ENCODE measurements at regions of chrX and their contacts with region 1.

Region 1: GRCh38 chrX:2351999-2352995 is 148.5 kb downstream of the DHRSX start:
- DNase-seq: peak; percentile 99
- ATAC-seq: peak; percentile 93
- H3K4me3 ChIP-seq: no peak overlapping the region
- H3K27ac ChIP-seq: peak overlapping the region; percentile 87
- H3K4me1 ChIP-seq: peaks cover 14% of the 10 kb centered on the region
- H3K27me3 ChIP-seq: no peaks in the 10 kb centered on the region
- CTCF ChIP-seq: 0 out of 2 replicates have a peak, but pooled peaks have one; percentile 2
- POLR2A ChIP-seq: no peak
- RAD21 ChIP-seq: peak; percentile 20

Region 2: DNA sequence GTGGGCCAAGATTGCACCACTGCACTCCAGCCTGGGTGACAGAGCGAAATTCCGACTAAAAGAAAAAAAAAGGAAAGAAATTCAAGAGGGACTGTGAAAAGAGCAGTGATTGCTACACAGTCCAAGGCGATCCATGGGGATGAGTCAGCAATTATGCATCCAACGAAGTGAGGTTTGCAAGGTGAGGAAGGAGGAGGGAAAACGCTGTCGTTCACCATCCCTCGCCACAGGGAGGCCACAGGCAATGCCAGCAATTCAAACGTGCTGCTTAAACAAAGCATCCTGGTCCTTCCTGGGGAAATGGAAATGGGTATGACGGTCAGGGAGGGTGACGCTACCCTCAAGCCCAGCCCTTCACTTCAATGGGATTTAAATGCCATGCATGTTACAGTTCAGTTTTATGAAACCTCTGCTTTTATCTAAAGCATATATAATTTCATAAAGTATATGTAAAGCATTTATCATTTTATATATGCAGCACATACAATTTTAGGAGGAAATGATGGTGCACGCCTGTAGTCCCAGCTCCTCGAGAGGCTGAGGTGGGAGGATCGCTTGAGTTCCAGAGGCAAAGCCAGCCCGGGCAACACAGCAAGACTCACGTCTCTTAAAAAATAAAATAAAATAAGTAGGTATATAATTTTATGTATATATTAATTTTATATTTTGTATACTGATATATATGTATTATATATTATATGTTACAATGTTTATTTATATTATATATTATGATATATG is 39.7 kb after region 1 on chrX:
- CTCF ChIA-PET with region 1: no interaction called
- POLR2A ChIA-PET with region 1: no interaction called
- dilution Hi-C with region 1: no loop called
- in situ Hi-C with region 1: no loop called
- intact Hi-C with region 1: no loop called
- DNase-seq: peak; percentile 82
- ATAC-seq: peak; percentile 69
- H3K4me3 ChIP-seq: no peak overlapping the region
- H3K27ac ChIP-seq: no peak overlapping the region
- H3K4me1 ChIP-seq: peaks cover 7% of the 10 kb centered on the region
- H3K27me3 ChIP-seq: no peaks in the 10 kb centered on the region
- CTCF ChIP-seq: no peak
- POLR2A ChIP-seq: no peak
- RAD21 ChIP-seq: no peak

Region 3: GRCh38 chrX:2451501-2452316 is 99.4 kb after region 1 on chrX:
- CTCF ChIA-PET with region 1: no interaction called
- POLR2A ChIA-PET with region 1: no interaction called
- dilution Hi-C with region 1: no loop called
- in situ Hi-C with region 1: no loop called
- intact Hi-C with region 1: loop called (anchors 5 kb)
- DNase-seq: peak; percentile 62
- ATAC-seq: peak; percentile 82
- H3K4me3 ChIP-seq: no peak overlapping the region
- H3K27ac ChIP-seq: no peak overlapping the region
- H3K4me1 ChIP-seq: 0 out of 2 replicates have a peak, but pooled peaks cover 1% of the 10 kb centered on the region
- H3K27me3 ChIP-seq: no peaks in the 10 kb centered on the region
- CTCF ChIP-seq: no peak
- POLR2A ChIP-seq: no peak
- RAD21 ChIP-seq: no peak